Activated naive CD4-positive, alpha-beta T cell treated with anti-CD3 and anti-CD28 coated beads for 36 hours (primary cell): ENCODE measurements at regions of chr12 and their contacts with region 1.

Region 1: GRCh38 chr12:6430124-6430989 is 14.4 kb upstream of the CD27 start:
- DNase-seq: peak; percentile 78
- H3K4me3 Mint-ChIP-seq: peak overlapping the region; percentile 46
- H3K27ac Mint-ChIP-seq: peak overlapping the region; percentile 84
- H3K4me1 Mint-ChIP-seq: peaks cover 85% of the 10 kb centered on the region
- H3K27me3 Mint-ChIP-seq: no peaks in the 10 kb centered on the region

Region 2: GRCh38 chr12:6443361-6443983 is 13.1 kb after region 1 on chr12:
- CTCF ChIA-PET with region 1: interaction called, 73 read pairs
- intact Hi-C with region 1: loop called (anchors 1 kb)
- DNase-seq: peak; percentile 79
- H3K4me3 Mint-ChIP-seq: peak overlapping the region; percentile 92
- H3K27ac Mint-ChIP-seq: peak overlapping the region; percentile 98
- H3K4me1 Mint-ChIP-seq: peaks cover 74% of the 10 kb centered on the region
- H3K27me3 Mint-ChIP-seq: no peaks in the 10 kb centered on the region

Region 3: GRCh38 chr12:6451348-6452244 is 21.2 kb after region 1 on chr12 and contains the start of gene TAPBPL:
- CTCF ChIA-PET with region 1: interaction called, 73 read pairs
- intact Hi-C with region 1: loop called (anchors 1 kb)
- DNase-seq: peak; percentile 93
- H3K4me3 Mint-ChIP-seq: peak within 1 kb of the TSS; percentile 98
- H3K27ac Mint-ChIP-seq: peak within 1 kb of the TSS; percentile 98
- H3K4me1 Mint-ChIP-seq: peaks cover 65% of the 10 kb centered on the region
- H3K27me3 Mint-ChIP-seq: no peaks in the 10 kb centered on the region
- total RNA-seq, gene TAPBPL: 27.9 to 28.0 TPM

Region 4: GRCh38 chr12:6461401-6462233 is 31.3 kb after region 1 on chr12:
- CTCF ChIA-PET with region 1: interaction called, 223 read pairs
- intact Hi-C with region 1: loop called (anchors 1 kb)
- DNase-seq: peak; percentile 93
- H3K4me3 Mint-ChIP-seq: peak overlapping the region; percentile 80
- H3K27ac Mint-ChIP-seq: peak overlapping the region; percentile 97
- H3K4me1 Mint-ChIP-seq: peaks cover 89% of the 10 kb centered on the region
- H3K27me3 Mint-ChIP-seq: no peaks in the 10 kb centered on the region

Region 5: GRCh38 chr12:6470375-6471163 is 40.2 kb after region 1 on chr12 and contains the start of gene VAMP1:
- CTCF ChIA-PET with region 1: interaction called, 223 read pairs
- intact Hi-C with region 1: loop called (anchors 1 kb)
- DNase-seq: peak; percentile 99
- H3K4me3 Mint-ChIP-seq: peak within 1 kb of the TSS; percentile 91
- H3K27ac Mint-ChIP-seq: peak within 1 kb of the TSS; percentile 90
- H3K4me1 Mint-ChIP-seq: peaks cover 53% of the 10 kb centered on the region
- H3K27me3 Mint-ChIP-seq: no peaks in the 10 kb centered on the region
- total RNA-seq, gene VAMP1: 31.9 to 33.5 TPM